Mammary epithelial cell (primary cell): ENCODE measurements at regions of chr5 and their contacts with region 1.

Region 1: GRCh38 chr5:141001854-141002604 is 35.8 kb downstream of the PCDHAC2 start:
- DNase-seq: peak; percentile 52
- H3K4me3 ChIP-seq: peak overlapping the region; percentile 39 to 56 (median 51)
- H3K27ac ChIP-seq: peak overlapping the region; percentile 93
- H3K4me1 ChIP-seq: peaks cover 38% of the 10 kb centered on the region
- H3K27me3 ChIP-seq: no peaks in the 10 kb centered on the region
- CTCF ChIP-seq: no peak

Region 2: DNA sequence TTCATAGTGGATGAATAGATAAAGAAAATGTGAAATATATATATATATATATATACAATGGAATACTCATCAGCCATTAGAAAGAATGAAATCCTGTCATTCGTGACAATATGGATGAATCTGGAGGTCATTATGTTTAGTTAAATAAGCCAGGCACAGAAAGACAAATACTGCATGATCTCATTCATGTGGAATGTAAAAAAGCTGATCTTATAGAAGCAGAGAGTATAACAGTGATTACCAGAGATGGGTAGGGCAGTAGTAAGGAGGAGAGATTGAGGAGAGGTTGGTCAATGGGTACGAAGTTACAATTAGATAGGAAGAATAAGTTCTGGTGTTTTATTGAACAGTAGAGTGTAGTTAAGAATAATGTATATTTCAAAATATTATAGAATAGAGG is 55.5 kb before region 1 on chr5:
- CTCF ChIA-PET with region 1: no interaction called
- dilution Hi-C with region 1: no loop called
- in situ Hi-C with region 1: no loop called
- intact Hi-C with region 1: loop called (anchors 5 kb)
- DNase-seq: no peak
- H3K4me3 ChIP-seq: no peak overlapping the region
- H3K27ac ChIP-seq: no peak overlapping the region
- H3K4me1 ChIP-seq: peaks cover 2% of the 10 kb centered on the region
- H3K27me3 ChIP-seq: no peaks in the 10 kb centered on the region
- CTCF ChIP-seq: no peak

Region 3: GRCh38 chr5:140966293-140967225 is 35.5 kb before region 1 on chr5 and contains the start of gene PCDHAC2:
- CTCF ChIA-PET with region 1: no interaction called
- dilution Hi-C with region 1: no loop called
- in situ Hi-C with region 1: loop called in 1 of 2 experiments (anchors 5 kb)
- intact Hi-C with region 1: loop called (anchors 1 kb)
- DNase-seq: peak; percentile 68
- H3K4me3 ChIP-seq: peak within 1 kb of the TSS; percentile 65 to 74 (median 68)
- H3K27ac ChIP-seq: no peak within 1 kb of the TSS
- H3K4me1 ChIP-seq: peaks cover 10% of the 10 kb centered on the region
- H3K27me3 ChIP-seq: no peaks in the 10 kb centered on the region
- CTCF ChIP-seq: no peak
- total RNA-seq, gene PCDHAC2: 3.7 to 5.8 TPM

Region 4: GRCh38 chr5:140977003-140977402 is 25.0 kb before region 1 on chr5:
- CTCF ChIA-PET with region 1: no interaction called
- dilution Hi-C with region 1: no loop called
- in situ Hi-C with region 1: no loop called
- intact Hi-C with region 1: loop called (anchors 1 kb)
- DNase-seq: peak; percentile 44
- H3K4me3 ChIP-seq: no peak overlapping the region
- H3K27ac ChIP-seq: no peak overlapping the region
- H3K4me1 ChIP-seq: peaks cover 5% of the 10 kb centered on the region
- H3K27me3 ChIP-seq: no peaks in the 10 kb centered on the region
- CTCF ChIP-seq: no peak

Region 5: DNA sequence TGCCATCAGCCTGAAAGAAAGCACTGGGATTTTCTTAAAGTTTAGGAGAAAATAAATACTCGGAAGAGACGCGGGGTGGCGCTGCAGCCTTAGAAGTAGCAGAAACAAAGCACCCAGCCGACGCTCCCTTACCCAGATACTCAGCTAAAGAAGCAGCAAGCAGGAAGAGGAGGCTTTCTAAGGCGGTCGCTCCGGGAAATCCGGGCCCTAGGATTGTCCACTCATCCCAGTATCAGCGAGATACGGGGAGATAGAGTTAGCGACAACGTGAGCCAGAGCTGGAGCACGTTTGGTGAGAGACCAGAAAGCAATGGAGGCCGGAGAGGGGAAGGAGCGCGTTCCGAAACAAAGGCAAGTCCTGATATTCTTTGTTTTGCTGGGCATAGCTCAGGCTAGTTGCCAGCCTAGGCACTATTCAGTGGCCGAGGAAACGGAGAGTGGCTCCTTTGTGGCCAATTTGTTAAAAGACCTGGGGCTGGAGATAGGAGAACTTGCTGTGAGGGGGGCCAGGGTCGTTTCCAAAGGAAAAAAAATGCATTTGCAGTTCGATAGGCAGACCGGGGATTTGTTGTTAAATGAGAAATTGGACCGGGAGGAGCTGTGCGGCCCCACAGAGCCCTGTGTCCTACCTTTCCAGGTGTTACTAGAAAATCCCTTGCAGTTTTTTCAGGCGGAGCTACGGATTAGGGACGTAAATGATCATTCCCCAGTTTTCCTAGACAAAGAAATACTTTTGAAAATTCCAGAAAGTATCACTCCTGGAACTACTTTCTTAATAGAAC is 92.6 kb after region 1 on chr5 and contains the start of gene PCDHB2:
- CTCF ChIA-PET with region 1: no interaction called
- dilution Hi-C with region 1: no loop called
- in situ Hi-C with region 1: no loop called
- intact Hi-C with region 1: no loop called
- DNase-seq: peak; percentile 71
- H3K4me3 ChIP-seq: peak within 1 kb of the TSS; percentile 58 to 69 (median 59)
- H3K27ac ChIP-seq: peak within 1 kb of the TSS; percentile 32
- H3K4me1 ChIP-seq: no peaks in the 10 kb centered on the region
- H3K27me3 ChIP-seq: no peaks in the 10 kb centered on the region
- CTCF ChIP-seq: peak; percentile 49 to 57
- total RNA-seq, gene PCDHB2: 2.2 to 6.8 TPM